Activated B cell treated with CpG ODN at 0.5 μM for 24 hours (primary cell): ENCODE measurements at regions of chr2 and their contacts with region 1.

Region 1: DNA sequence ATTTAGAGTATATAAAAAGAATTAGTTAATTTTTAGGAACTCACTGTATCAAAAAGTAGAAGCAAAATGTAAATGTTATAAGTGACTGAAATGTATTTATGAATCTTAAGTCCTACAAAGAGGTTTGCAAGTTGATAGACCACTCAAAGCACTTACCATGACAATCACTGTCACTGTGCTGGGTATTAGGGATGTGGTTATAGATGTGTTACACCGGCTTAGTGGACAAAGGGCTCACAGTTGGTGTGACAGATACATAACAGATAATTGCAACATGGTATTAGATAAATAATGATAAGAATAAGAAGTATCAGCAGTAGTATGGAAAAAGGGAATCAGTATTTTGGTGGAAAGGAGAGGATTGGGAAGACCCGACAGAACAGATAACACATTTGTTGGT is 21.6 kb downstream of the AGFG1 start:
- DNase-seq: no peak
- ATAC-seq: no peak
- H3K4me3 Mint-ChIP-seq: no peak overlapping the region
- H3K27ac Mint-ChIP-seq: no peak overlapping the region
- H3K4me1 Mint-ChIP-seq: peaks cover 31% of the 10 kb centered on the region
- H3K27me3 Mint-ChIP-seq: no peaks in the 10 kb centered on the region
- CTCF ChIP-seq: no peak

Region 2: GRCh38 chr2:227455200-227455599 is 38.3 kb before region 1 on chr2:
- CTCF ChIA-PET with region 1: no interaction called
- POLR2A ChIA-PET with region 1: no interaction called
- intact Hi-C with region 1: no loop called
- DNase-seq: no peak
- ATAC-seq: no peak
- H3K4me3 Mint-ChIP-seq: no peak overlapping the region
- H3K27ac Mint-ChIP-seq: no peak overlapping the region
- H3K4me1 Mint-ChIP-seq: peaks cover 43% of the 10 kb centered on the region
- H3K27me3 Mint-ChIP-seq: no peaks in the 10 kb centered on the region
- CTCF ChIP-seq: no peak

Region 3: DNA sequence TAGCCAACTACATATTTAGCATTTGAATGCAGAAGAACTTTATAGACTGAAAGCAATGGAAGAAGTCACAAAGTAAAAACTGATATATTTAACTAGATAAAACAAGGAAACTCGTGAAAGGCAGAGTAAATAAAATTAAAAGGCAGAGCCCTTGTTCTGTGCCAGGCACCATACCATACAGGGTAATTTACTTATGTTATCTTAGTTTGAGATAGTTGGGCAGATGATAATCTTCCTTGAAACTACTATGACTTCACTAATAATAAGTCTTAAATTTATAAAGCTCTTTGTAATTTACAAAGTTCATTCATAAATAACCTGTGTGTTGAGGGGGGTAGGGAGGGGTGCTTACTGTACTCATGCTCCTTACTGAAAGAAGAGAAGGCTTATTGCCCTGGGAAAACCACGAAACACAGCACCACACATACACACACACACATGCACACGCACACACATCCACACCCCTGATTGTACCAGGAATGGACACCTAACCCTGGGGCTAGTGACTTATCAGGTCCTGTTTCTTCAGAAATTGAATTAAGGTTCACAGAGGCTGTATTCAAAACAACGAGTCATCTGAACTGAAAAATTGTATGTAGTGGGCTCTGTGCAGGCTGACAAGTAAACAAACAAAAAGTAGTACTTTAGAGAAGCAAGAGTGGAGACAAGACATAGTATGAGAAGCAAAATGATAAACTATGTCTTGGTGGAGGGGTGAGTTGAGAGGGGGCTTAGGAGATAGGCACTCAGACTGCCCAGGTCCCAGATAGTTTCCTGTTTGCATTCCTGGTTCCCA is 16.5 kb after region 1 on chr2:
- CTCF ChIA-PET with region 1: no interaction called
- POLR2A ChIA-PET with region 1: no interaction called
- intact Hi-C with region 1: loop called (anchors 2 kb)
- DNase-seq: no peak
- ATAC-seq: no peak
- H3K4me3 Mint-ChIP-seq: no peak overlapping the region
- H3K27ac Mint-ChIP-seq: peak overlapping the region; percentile 46
- H3K4me1 Mint-ChIP-seq: peaks cover 85% of the 10 kb centered on the region
- H3K27me3 Mint-ChIP-seq: no peaks in the 10 kb centered on the region
- CTCF ChIP-seq: no peak